Ovary (tissue), 10 donors: ENCODE measurements at regions of chr15 and their contacts with region 1.

Region 1: DNA sequence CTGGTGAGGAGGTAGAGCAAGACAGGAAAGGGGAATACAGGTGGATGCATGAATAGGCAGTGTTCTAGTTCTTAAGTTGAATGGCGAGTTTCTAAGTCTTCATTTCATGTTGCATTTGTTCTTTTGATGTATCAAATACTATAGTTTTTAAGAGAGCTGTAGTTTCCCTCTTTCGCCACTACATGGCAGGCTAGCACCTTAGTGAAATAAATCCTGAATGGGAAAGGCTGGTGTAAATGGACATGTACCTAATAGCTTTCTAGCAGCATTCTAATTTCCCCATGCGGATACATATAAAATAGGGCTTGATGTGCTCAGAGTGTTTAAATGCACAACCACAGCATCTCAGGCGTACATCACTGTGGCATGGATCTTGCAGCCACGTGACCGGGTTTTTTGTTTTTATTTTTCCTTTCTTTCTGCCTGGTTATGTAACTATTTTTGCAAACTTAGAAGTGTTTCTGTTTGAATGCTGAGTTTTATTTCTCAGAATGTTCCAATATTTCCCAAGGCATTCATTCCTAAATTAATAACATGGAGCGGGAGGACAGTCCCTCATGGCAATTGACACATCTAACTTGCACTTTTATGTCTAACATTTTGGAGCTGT is 23.5 kb upstream of the CLN6 start:
- DNase-seq: peak in 2 of 5 donors; percentile 31 to 57
- H3K4me3 ChIP-seq: no peak overlapping the region
- H3K27ac ChIP-seq: no peak overlapping the region
- H3K4me1 ChIP-seq: peaks cover 4% of the 10 kb centered on the region
- H3K27me3 ChIP-seq: no peaks in the 10 kb centered on the region
- CTCF ChIP-seq: peak; percentile 86 to 91 (median 87)
- EP300 ChIP-seq: no peak
- POLR2A ChIP-seq: no peak

Region 2: DNA sequence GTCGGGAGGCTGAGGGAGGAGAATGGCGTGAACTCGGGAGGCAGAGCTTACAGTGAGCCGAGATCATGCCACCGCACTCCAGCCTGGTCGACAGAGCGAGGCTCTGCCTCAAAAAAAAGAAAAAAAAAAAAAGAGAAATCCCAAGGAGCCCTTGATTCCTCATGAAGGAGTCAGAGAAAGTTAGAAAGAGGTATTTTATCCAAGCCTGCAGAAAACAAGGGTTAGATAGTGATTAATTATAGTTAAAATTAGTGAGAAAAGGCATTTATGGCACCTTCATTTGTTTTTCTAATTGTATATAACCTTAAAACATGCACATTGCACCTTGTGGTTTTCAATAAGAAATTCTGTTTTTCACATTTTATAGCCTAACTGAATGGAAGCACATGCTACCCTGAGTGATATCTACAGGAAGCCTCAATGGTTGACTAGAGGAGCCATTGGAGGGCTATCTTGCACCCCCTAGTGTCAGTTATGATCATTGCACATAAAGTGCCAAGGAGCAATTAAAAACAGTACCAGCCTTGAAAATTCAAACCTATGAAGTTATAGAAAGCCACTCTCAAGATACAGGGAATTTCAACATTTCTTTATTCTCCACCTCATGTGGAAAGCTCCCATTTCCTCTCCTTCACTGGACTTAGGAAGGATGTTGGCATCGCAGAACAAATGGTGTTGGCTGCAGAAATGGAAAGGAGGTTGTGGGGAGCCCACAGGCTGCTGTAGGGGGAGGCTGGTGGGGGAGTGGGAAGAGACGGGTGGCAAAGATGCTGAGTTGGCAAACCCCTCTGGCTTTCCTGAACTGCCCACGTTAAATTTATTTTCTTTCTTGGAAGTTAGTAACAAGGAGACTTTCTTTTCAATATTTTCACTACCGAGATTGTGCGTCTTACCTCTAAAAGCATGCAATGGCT is 130.4 kb after region 1 on chr15:
- intact Hi-C with region 1: loop called in 1 of 4 experiments (anchors 10 kb)
- DNase-seq: peak in 2 of 5 donors; percentile 5 to 7
- H3K4me3 ChIP-seq: no peak overlapping the region
- H3K27ac ChIP-seq: no peak overlapping the region
- H3K4me1 ChIP-seq: peaks cover 5% of the 10 kb centered on the region
- H3K27me3 ChIP-seq: no peaks in the 10 kb centered on the region
- CTCF ChIP-seq: peak in 2 of 3 donors; percentile 51 to 58
- EP300 ChIP-seq: no peak
- POLR2A ChIP-seq: no peak